WTC11 (cell line): ENCODE measurements at regions of chr16 and their contacts with region 1.

Region 1: GRCh38 chr16:600781-601180 is 10.9 kb downstream of the RAB40C start:
- DNase-seq: no peak
- ATAC-seq: peak; percentile 89
- H3K4me3 Mint-ChIP-seq: no peak overlapping the region
- H3K27ac Mint-ChIP-seq: peak overlapping the region; percentile 22; the same call in 1 of the 2 replicates
- H3K4me1 Mint-ChIP-seq: no peaks in the 10 kb centered on the region
- H3K27me3 Mint-ChIP-seq: no peaks in the 10 kb centered on the region
- CTCF ChIP-seq: no peak

Region 2: GRCh38 chr16:296806-297510 is 303.8 kb before region 1 on chr16:
- CTCF ChIA-PET with region 1: no interaction called
- POLR2A ChIA-PET with region 1: no interaction called
- DNase-seq: no peak
- ATAC-seq: no peak
- H3K4me3 Mint-ChIP-seq: no peak overlapping the region
- H3K27ac Mint-ChIP-seq: no peak overlapping the region
- H3K4me1 Mint-ChIP-seq: no peaks in the 10 kb centered on the region
- H3K27me3 Mint-ChIP-seq: no peaks in the 10 kb centered on the region
- CTCF ChIP-seq: no peak

Region 3: DNA sequence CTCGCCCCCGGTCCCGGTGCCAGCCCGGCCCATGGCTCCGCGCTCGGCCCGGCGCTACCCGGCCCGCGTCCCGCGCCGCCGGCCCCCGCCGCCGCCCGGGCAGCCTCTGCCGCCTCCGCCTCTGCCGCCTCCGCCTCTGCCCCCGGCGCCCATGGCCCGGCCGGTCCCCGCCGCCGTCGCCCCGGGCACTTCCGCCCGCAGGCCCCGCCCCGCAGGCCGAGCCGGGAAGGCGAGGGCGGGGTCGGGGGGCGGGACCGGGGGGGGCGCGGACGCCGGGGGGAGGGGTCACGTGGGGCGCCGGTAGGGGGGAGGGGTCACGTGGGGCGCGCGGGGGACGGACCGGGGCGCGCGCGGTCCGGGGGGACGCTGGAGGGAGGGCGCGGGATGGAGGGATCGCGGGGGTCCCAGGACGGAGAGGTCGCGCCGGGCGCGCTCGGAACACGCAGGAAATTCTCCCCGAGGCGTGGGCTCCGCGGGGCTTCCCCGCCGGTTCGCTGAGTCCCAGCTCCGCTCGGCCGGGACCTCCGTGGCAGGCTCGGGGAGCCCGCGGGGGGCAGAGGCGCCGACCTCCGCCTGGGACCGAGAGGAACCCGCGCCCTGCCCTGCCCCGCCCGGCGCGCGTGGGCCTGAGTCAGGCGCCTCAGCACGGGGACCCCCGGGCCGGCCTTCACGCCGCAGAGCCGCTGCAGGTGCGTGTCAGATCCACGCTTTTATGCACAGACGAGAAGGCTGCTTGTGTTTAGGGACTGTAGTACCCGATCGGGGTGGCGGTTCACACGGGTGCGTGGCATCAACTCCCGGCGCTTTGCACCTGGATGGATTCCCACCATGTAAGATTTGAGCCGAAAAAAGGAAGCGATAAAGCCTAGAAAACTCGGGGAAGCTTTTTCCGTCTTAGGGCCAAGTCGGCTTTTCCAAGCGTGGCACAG is 218.7 kb before region 1 on chr16 and contains the start of gene PGAP6:
- CTCF ChIA-PET with region 1: no interaction called
- POLR2A ChIA-PET with region 1: no interaction called
- DNase-seq: peak; percentile 57
- ATAC-seq: no peak
- H3K4me3 Mint-ChIP-seq: peak within 1 kb of the TSS; percentile 79
- H3K27ac Mint-ChIP-seq: peak within 1 kb of the TSS; percentile 98
- H3K4me1 Mint-ChIP-seq: peaks cover 40% of the 10 kb centered on the region
- H3K27me3 Mint-ChIP-seq: no peaks in the 10 kb centered on the region
- CTCF ChIP-seq: no peak
- total RNA-seq, gene PGAP6: 104 to 108 TPM (median 107 TPM) in 3 replicates

Region 4: GRCh38 chr16:527006-527753 is 73.6 kb before region 1 on chr16 and contains the start of gene CAPN15:
- CTCF ChIA-PET with region 1: interaction called, 10 read pairs
- POLR2A ChIA-PET with region 1: no interaction called
- DNase-seq: peak; percentile 77
- ATAC-seq: peak; percentile 77
- H3K4me3 Mint-ChIP-seq: peak within 1 kb of the TSS; percentile 89
- H3K27ac Mint-ChIP-seq: peak within 1 kb of the TSS; percentile 76; the same call in 1 of the 2 replicates
- H3K4me1 Mint-ChIP-seq: peaks cover 20% of the 10 kb centered on the region
- H3K27me3 Mint-ChIP-seq: no peaks in the 10 kb centered on the region
- CTCF ChIP-seq: no peak
- total RNA-seq, gene CAPN15: 89.3 to 110 TPM (median 93.8 TPM) in 3 replicates

Region 5: DNA sequence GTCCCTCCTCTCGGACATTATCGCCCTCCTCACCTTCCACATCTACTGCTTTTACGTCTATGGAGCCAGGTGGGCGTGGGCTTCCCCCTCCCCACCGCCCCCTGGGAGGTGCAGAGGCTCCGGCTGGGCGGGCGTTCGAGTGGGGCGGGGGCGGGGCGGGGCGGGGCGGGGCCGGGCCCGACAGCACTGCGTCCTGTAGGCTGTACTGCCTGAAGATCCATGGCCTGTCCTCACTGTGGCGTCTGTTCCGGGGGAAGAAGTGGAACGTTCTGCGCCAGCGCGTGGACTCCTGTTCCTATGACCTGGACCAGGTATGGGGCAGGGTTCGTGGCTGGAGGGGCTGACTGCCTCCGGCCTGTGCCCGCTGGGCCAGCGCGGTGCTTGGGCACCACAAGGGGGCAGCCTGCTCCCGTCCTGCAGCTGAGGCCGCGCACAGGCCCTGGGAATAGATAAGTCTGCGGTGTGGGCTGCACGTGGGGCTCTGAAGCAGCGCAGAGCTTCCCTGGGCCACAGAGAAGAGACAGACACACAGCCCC is 21.8 kb before region 1 on chr16:
- CTCF ChIA-PET with region 1: interaction called, 12 read pairs
- POLR2A ChIA-PET with region 1: no interaction called
- DNase-seq: peak; percentile 88
- ATAC-seq: peak; percentile 73
- H3K4me3 Mint-ChIP-seq: no peak overlapping the region
- H3K27ac Mint-ChIP-seq: no peak overlapping the region
- H3K4me1 Mint-ChIP-seq: peaks cover 4% of the 10 kb centered on the region
- H3K27me3 Mint-ChIP-seq: no peaks in the 10 kb centered on the region
- CTCF ChIP-seq: peak; percentile 73

Region 6: DNA sequence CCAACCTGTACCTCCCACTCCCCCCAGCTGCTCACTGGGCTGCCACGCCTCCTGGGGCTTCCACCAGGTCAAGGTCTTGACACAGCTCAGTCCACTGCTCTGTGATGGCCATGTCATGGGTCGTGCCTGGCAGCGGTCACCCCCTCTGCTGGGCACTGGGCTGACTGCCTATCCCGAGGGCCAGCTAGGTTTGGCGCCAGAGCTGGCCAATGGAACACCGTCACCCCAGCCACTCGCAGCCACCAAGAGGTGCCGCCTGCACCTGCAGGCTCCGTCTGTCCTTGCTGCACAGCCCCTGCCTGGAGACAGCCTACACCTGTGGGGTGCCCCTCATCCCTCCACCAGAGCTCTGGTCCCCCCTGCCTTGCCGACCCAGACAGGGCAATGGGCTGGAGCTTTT is 15.4 kb before region 1 on chr16:
- CTCF ChIA-PET with region 1: interaction called, 12 read pairs
- POLR2A ChIA-PET with region 1: interaction called, 6 read pairs
- DNase-seq: no peak
- ATAC-seq: peak; percentile 0; the same call in 1 of the 2 replicates
- H3K4me3 Mint-ChIP-seq: no peak overlapping the region
- H3K27ac Mint-ChIP-seq: no peak overlapping the region
- H3K4me1 Mint-ChIP-seq: peaks cover 12% of the 10 kb centered on the region
- H3K27me3 Mint-ChIP-seq: peaks cover 32% of the 10 kb centered on the region
- CTCF ChIP-seq: no peak

Region 7: GRCh38 chr16:621528-622105 is 20.8 kb after region 1 on chr16:
- CTCF ChIA-PET with region 1: interaction called, 21 read pairs
- POLR2A ChIA-PET with region 1: no interaction called
- DNase-seq: no peak
- ATAC-seq: no peak
- H3K4me3 Mint-ChIP-seq: no peak overlapping the region
- H3K27ac Mint-ChIP-seq: peak overlapping the region; percentile 70
- H3K4me1 Mint-ChIP-seq: peaks cover 24% of the 10 kb centered on the region
- H3K27me3 Mint-ChIP-seq: no peaks in the 10 kb centered on the region
- CTCF ChIP-seq: no peak

Region 8: DNA sequence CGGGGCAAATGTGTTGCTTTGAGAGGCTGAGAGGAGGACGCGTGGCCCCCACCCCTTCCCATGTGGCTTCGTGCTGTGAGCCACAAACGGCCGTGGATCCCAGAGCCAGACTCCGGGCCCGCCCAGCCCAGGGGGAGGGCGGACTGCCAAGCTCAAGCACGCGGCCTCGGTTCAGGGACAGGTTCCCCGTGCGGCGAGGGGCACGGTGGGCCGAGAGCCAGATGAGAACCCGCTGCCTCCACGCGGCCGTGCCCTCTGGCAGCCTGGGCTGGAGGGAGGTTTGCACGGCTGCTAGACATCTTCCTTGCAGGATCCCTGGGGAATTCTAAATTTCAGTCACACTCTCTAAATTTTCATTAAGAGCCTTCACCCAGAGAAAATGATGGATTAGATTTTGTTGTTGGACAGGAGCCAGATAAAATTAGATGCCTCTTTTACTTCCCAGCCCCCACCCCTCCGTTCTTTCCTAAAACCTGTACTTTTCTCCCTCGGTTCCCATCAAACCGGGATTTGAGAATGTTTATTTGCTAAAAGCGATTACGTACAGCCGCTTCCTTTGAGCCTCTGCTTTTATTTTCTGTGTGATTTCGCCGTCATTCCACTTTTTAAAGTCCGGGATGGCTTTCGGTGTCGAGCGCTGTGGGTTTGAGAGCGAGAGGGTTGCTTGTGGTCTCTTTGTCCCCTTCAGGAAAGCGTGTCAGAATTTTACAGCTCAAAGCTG is 224.7 kb after region 1 on chr16:
- CTCF ChIA-PET with region 1: no interaction called
- POLR2A ChIA-PET with region 1: no interaction called
- DNase-seq: no peak
- ATAC-seq: no peak
- H3K4me3 Mint-ChIP-seq: no peak overlapping the region
- H3K27ac Mint-ChIP-seq: no peak overlapping the region; the same call in 1 of the 2 replicates
- H3K4me1 Mint-ChIP-seq: peaks cover 4% of the 10 kb centered on the region
- H3K27me3 Mint-ChIP-seq: no peaks in the 10 kb centered on the region
- CTCF ChIP-seq: no peak